ENCODE measurements at regions of chr4 and their contacts with region 1.

Region 1: DNA sequence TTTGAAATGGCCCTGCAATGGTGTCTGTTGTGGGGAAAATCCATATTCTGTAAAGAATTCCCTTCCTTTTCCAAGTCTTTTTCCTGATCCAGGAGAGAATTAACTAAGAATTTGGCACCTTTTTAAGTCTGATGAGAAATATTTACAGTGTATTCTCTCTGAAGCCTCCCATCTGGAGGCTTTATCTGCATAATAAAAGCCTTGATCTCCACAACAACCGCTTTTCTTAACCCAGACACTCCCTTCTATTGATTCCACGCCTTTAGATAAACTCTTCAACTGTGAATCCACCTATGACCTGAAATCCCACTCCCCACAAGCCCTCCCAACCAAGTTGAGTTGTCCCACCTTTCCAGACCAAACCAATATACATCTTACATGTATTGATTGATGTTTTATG is 43.1 kb upstream of the TMPRSS11E start:
- DNase-seq: no peak
- H3K4me3 ChIP-seq: peak overlapping the region in 1 of 4 experiments; percentile 37; a peak in 1 of 8 replicates
- H3K27ac ChIP-seq: peak overlapping the region; percentile 83
- H3K4me1 ChIP-seq: peaks cover 12 to 21% (median 17%) of the 10 kb centered on the region in 4 experiments
- H3K27me3 ChIP-seq: no peaks in the 10 kb centered on the region
- CTCF ChIP-seq: no peak
- EP300 ChIP-seq: peak in 1 of 2 experiments; percentile 81; a peak in 1 of 3 replicates
- POLR2A ChIP-seq: no peak; a peak in 1 of 3 replicates
- RAD21 ChIP-seq: no peak

Region 2: DNA sequence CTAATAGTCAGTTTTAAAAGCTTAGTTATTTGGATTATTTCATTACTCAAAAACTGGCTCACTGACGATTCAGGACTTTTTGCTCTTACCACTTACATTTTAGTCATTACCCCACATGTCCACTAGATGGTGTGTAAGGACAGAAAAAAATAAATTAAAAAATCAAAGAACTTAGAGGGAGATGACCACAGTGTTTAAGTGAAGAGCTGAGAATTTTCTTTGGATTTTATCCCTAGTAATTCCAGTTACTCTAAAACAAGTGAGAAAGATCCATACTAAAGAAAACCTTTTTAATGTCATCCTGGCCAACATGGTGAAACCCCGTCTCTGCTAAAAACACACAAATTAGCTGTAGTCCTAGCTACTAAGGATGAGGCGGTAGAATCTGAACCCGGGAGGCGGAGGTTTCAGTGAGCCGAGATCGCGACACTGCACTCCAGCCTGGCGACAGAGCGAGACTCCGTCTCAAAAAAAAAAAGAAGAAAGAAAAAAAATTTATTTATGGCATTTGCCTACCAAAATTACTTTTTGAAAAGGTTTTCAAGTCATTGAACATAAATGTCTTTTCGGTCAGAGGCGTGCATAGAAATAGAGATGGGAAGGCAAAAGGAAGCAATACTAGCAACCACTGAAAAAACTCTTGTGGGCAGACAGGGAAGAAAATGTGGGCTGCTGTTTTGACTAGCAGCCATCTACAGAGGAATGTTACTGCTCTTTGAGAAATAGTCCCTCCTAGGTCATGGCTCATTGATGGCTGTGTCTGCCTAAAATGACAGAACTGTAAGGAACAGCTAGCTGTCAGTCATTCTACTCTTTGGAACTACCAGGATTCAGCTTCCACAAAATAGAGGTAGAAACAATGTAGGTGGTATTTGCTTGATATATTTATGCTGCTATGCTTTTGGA is 132.0 kb before region 1 on chr4:
- CTCF ChIA-PET with region 1: interaction called, 3 read pairs
- POLR2A ChIA-PET with region 1: interaction called, 13 read pairs
- DNase-seq: no peak
- H3K4me3 ChIP-seq: peak overlapping the region in 2 of 4 experiments; percentile 8 to 48; a peak in 4 of 8 replicates
- H3K27ac ChIP-seq: peak overlapping the region; percentile 7; the same call in 1 of the 2 replicates
- H3K4me1 ChIP-seq: peaks cover 2 to 15% (median 8%) of the 10 kb centered on the region in 4 experiments; a peak in 4 of 7 replicates
- H3K27me3 ChIP-seq: no peaks in the 10 kb centered on the region
- CTCF ChIP-seq: peak in 2 of 3 experiments; percentile 38 to 46; a peak in 2 of 4 replicates
- EP300 ChIP-seq: no peak
- POLR2A ChIP-seq: no peak
- RAD21 ChIP-seq: peak; percentile 66 to 71

Region 3: DNA sequence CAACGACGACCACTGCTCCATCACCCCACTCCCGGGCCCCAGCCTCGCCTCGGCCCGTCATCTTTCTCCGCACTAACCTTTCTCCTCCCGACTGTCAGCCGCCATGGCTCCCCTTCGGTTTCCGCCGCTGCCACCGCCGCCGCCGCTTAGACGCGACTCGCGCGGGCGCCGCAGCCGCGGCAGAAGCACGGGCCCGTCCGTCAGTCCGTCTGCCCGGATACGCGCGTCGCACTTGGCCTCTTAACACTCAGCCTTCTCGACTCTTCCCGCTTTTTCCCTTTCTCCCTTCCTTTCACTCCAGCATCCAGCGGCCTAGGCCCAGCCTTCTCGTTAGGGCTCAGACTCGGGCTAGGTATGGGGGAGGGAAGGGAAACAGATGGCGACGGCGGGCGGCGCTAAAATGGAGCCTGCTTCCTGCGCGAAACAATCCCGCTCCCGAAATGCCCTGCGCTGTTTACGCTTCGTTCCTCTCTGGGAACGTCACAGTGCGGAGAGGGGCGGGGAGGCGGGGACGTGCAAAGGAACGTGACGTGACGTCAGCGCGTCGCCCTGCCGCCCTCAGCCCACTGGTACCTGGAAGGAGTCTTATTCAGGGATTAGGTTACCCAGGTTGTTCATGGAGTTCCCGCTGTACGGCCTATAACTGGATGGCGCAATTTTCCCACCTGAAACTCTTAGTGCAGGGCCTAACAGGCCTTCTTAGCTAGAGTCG is 54.3 kb before region 1 on chr4 and contains the start of gene YTHDC1:
- CTCF ChIA-PET with region 1: interaction called, 3 read pairs
- POLR2A ChIA-PET with region 1: interaction called, 68 read pairs
- DNase-seq: peak; percentile 88 to 93
- H3K4me3 ChIP-seq: peak within 1 kb of the TSS; percentile 88 to 94 (median 92)
- H3K27ac ChIP-seq: peak within 1 kb of the TSS; percentile 96
- H3K4me1 ChIP-seq: peaks cover 0 to 8% (median 3%) of the 10 kb centered on the region in 4 experiments; a peak in 4 of 7 replicates
- H3K27me3 ChIP-seq: no peaks in the 10 kb centered on the region
- CTCF ChIP-seq: no peak
- EP300 ChIP-seq: peak in 1 of 2 experiments; percentile 73; a peak in 1 of 3 replicates
- POLR2A ChIP-seq: peak; percentile 91 to 95
- RAD21 ChIP-seq: no peak
- total RNA-seq, gene YTHDC1: 89.5 and 94.5 TPM in 2 replicates

Region 4: GRCh38 chr4:68375667-68376559 is 28.2 kb before region 1 on chr4:
- CTCF ChIA-PET with region 1: interaction called, 16 read pairs
- POLR2A ChIA-PET with region 1: interaction called, 61 read pairs
- DNase-seq: peak in 1 of 2 experiments; percentile 66
- H3K4me3 ChIP-seq: peak overlapping the region in 3 of 4 experiments; percentile 10 to 48 (median 26); a peak in 4 of 8 replicates
- H3K27ac ChIP-seq: no peak overlapping the region
- H3K4me1 ChIP-seq: peaks cover 2 to 12% (median 4%) of the 10 kb centered on the region in 4 experiments
- H3K27me3 ChIP-seq: no peaks in the 10 kb centered on the region
- CTCF ChIP-seq: peak in 2 of 3 experiments; percentile 87 to 97; a peak in 3 of 4 replicates
- EP300 ChIP-seq: no peak
- POLR2A ChIP-seq: no peak
- RAD21 ChIP-seq: peak; percentile 78 to 82

Region 5: GRCh38 chr4:68390205-68390935 is 13.8 kb before region 1 on chr4:
- CTCF ChIA-PET with region 1: interaction called, 5 read pairs
- POLR2A ChIA-PET with region 1: interaction called, 50 read pairs
- DNase-seq: no peak
- H3K4me3 ChIP-seq: no peak overlapping the region
- H3K27ac ChIP-seq: no peak overlapping the region
- H3K4me1 ChIP-seq: peaks cover 0 to 12% (median 2%) of the 10 kb centered on the region in 4 experiments; a peak in 3 of 7 replicates
- H3K27me3 ChIP-seq: no peaks in the 10 kb centered on the region
- CTCF ChIP-seq: no peak
- EP300 ChIP-seq: no peak
- POLR2A ChIP-seq: no peak
- RAD21 ChIP-seq: no peak

Region 6: GRCh38 chr4:68416591-68416990 is 12.4 kb after region 1 on chr4:
- CTCF ChIA-PET with region 1: no interaction called
- POLR2A ChIA-PET with region 1: interaction called, 14 read pairs
- DNase-seq: no peak
- H3K4me3 ChIP-seq: no peak overlapping the region
- H3K27ac ChIP-seq: no peak overlapping the region
- H3K4me1 ChIP-seq: peaks cover 0 to 2% (median 0%) of the 10 kb centered on the region in 4 experiments; a peak in 1 of 7 replicates
- H3K27me3 ChIP-seq: no peaks in the 10 kb centered on the region
- CTCF ChIP-seq: no peak
- EP300 ChIP-seq: no peak
- POLR2A ChIP-seq: no peak
- RAD21 ChIP-seq: no peak

Region 7: GRCh38 chr4:68466185-68466584 is 62.0 kb after region 1 on chr4:
- CTCF ChIA-PET with region 1: no interaction called
- POLR2A ChIA-PET with region 1: no interaction called
- DNase-seq: no peak
- H3K4me3 ChIP-seq: no peak overlapping the region
- H3K27ac ChIP-seq: no peak overlapping the region
- H3K4me1 ChIP-seq: no peaks in the 10 kb centered on the region; a peak in 1 of 7 replicates
- H3K27me3 ChIP-seq: no peaks in the 10 kb centered on the region
- CTCF ChIP-seq: no peak
- EP300 ChIP-seq: no peak
- POLR2A ChIP-seq: no peak
- RAD21 ChIP-seq: no peak

Region 8: GRCh38 chr4:68904786-68905185 is 500.6 kb after region 1 on chr4:
- CTCF ChIA-PET with region 1: no interaction called
- POLR2A ChIA-PET with region 1: interaction called, 15 read pairs
- DNase-seq: no peak
- H3K4me3 ChIP-seq: peak overlapping the region in 1 of 4 experiments; percentile 48; a peak in 1 of 8 replicates
- H3K27ac ChIP-seq: peak overlapping the region; percentile 96
- H3K4me1 ChIP-seq: peaks cover 16 to 23% (median 20%) of the 10 kb centered on the region in 4 experiments
- H3K27me3 ChIP-seq: no peaks in the 10 kb centered on the region
- CTCF ChIP-seq: peak; percentile 43 to 51 (median 47)
- EP300 ChIP-seq: no peak
- POLR2A ChIP-seq: no peak
- RAD21 ChIP-seq: peak; percentile 48 to 66

Measured in H1 (cell line).